Head of caudate nucleus (tissue), 42 donors: ENCODE measurements at regions of chr12 and their contacts with region 1.

Region 1: DNA sequence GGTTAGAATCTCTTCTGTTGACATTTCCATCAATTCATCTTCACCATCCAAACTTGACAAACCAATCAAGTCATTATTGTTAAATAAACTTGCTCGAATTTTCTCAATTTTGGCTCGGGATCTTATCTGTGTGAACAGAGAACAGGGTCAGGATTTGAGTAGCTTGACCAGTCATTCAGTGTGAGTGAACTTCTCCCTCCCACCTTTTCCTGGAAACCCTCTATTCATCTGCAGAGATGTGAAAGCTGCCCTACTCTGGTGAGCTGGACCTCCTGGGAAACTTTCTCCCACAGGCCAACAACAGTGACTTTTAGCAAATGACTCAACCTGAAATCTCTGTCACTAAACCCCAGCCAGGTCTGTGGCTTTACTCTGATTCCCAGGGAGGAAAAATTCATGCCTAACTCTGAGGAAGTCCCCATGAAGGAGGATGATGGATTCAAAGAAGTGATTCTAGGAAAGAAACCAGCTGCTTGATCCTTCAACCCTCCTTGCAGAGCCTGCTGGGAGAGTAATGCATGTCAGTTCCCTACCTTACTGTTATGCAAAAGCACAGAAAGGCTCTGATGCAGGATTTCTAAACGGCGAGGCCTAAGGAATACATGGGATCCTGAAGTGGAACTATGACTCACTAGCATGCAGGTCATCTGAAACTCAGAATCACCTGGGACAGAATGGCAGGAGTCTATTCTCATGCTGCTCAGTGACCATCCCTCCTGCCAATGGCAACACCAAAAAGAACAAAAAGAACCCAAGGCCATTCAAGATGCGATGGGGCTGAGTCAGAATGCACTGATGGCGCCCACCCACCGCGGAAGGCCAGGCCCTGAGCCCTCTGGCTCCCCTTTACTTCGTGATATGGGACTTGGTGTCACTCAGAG is 58.0 kb downstream of the TRAFD1 start:
- DNase-seq: peak in 5 of 42 donors; percentile 31 to 68 (median 38)

Region 2: DNA sequence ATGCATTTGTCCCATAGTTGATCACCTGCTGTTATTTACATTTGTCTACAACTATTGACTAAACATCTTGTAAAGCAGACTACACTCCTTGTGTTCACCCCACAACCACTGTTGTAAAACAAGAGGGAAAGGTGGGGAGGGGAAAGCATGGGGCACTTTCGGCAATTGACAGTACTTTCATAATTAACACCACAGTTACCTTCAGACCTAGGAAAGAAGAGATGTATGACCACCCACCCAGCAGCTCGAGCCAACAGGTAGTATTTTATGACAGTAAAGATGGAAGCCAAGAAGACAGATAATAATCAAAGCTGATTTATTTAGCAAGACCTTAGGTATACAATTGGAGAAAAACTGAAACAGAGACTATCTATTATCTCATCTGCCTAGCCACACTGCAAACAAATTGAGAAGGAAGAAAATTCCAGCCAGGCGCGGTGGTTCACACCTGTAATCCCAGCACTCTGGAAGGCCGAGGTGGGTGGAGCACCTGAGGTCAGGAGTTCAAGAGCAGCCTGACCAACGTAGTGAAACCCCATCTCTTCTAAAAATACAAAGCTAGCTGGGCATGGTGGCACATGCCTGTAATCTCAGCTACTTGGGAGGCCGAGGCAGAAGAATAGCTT is 187.6 kb after region 1 on chr12:
- intact Hi-C with region 1: no loop called
- DNase-seq: no peak

Region 3: DNA sequence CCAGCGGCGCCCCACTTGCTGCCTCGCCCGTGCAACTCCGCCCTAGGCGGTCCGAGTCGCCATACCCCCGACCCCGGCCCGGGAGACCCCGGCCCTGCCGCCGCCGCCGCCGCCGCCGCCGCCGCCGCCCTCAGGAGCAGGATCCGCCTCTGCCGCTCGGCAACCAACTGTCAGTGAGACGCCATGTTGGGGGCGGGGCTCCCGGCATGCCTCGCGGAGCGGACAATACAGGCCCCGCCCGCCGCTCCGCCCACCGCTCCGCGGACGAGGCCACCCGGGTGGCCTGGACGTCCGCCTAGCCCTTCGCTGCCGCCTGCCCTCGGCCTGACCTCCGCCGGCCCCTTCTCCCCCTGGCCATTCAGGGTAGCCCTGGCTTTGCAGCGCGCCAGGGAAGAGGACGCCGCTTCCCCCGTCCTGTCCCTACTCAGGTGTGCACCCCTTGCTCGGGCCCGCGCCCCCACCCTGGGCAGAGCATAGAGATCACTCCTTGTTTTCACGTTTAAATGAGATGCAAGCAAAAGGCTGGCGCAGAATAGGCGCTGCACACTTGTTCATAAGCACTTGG is 198.9 kb after region 1 on chr12 and contains the start of gene HECTD4:
- intact Hi-C with region 1: loop called (anchors 10 kb)
- DNase-seq: peak; percentile 94 to 100 (median 98)

Region 4: GRCh38 chr12:112506513-112507166 is 323.3 kb after region 1 on chr12:
- intact Hi-C with region 1: no loop called
- DNase-seq: no peak